ENCODE measurements at regions of chr9 and their contacts with region 1.

Region 1: DNA sequence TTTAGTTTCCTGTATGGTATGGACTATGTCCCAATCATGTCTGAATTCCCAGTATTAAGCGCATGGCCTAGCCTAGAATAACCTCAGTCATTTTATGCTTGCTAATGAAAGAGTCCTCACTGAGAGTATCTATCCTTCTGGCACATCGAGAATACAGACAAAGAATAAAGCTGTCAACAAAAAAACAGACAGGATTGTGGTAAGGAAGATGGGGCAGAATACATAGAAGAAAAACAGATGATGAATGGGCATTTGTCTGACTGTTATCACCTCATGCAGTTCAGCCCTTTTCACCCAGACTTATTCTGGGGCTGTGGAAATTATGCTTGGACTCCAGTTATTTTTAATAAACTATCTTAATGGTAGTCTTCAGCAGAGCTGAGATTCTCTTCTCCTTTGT is 363.8 kb upstream of the TNC start:
- DNase-seq: no peak
- H3K4me3 ChIP-seq: no peak overlapping the region
- H3K4me3 Mint-ChIP-seq: no peak overlapping the region
- H3K27ac ChIP-seq: no peak overlapping the region
- H3K27ac Mint-ChIP-seq: no peak overlapping the region
- H3K4me1 ChIP-seq: no peaks in the 10 kb centered on the region
- H3K4me1 Mint-ChIP-seq: no peaks in the 10 kb centered on the region
- H3K27me3 ChIP-seq: no peaks in the 10 kb centered on the region
- H3K27me3 Mint-ChIP-seq: peaks cover 2 to 8% of the 10 kb centered on the region in 2 donors

Region 2: GRCh38 chr9:115469841-115470240 is 11.9 kb before region 1 on chr9:
- CTCF ChIA-PET with region 1: no interaction called
- POLR2A ChIA-PET with region 1: no interaction called
- intact Hi-C with region 1: loop called (anchors 1 kb)
- DNase-seq: no peak
- H3K4me3 ChIP-seq: no peak overlapping the region
- H3K4me3 Mint-ChIP-seq: no peak overlapping the region
- H3K27ac ChIP-seq: no peak overlapping the region
- H3K27ac Mint-ChIP-seq: no peak overlapping the region
- H3K4me1 ChIP-seq: no peaks in the 10 kb centered on the region
- H3K4me1 Mint-ChIP-seq: no peaks in the 10 kb centered on the region
- H3K27me3 ChIP-seq: no peaks in the 10 kb centered on the region
- H3K27me3 Mint-ChIP-seq: peaks cover 3 to 6% of the 10 kb centered on the region in 2 donors

Region 3: GRCh38 chr9:115507148-115507547 is 25.4 kb after region 1 on chr9:
- CTCF ChIA-PET with region 1: no interaction called
- POLR2A ChIA-PET with region 1: no interaction called
- intact Hi-C with region 1: no loop called
- DNase-seq: no peak
- H3K4me3 ChIP-seq: no peak overlapping the region
- H3K4me3 Mint-ChIP-seq: no peak overlapping the region
- H3K27ac ChIP-seq: no peak overlapping the region
- H3K27ac Mint-ChIP-seq: no peak overlapping the region
- H3K4me1 ChIP-seq: no peaks in the 10 kb centered on the region
- H3K4me1 Mint-ChIP-seq: no peaks in the 10 kb centered on the region
- H3K27me3 ChIP-seq: no peaks in the 10 kb centered on the region
- H3K27me3 Mint-ChIP-seq: peaks cover 5 to 8% of the 10 kb centered on the region in 2 donors

Measured in CD4-positive, alpha-beta memory T cell (primary cell).